Naive thymus-derived CD4-positive, alpha-beta T cell (primary cell): ENCODE measurements at regions of chr12 and their contacts with region 1.

Region 1: DNA sequence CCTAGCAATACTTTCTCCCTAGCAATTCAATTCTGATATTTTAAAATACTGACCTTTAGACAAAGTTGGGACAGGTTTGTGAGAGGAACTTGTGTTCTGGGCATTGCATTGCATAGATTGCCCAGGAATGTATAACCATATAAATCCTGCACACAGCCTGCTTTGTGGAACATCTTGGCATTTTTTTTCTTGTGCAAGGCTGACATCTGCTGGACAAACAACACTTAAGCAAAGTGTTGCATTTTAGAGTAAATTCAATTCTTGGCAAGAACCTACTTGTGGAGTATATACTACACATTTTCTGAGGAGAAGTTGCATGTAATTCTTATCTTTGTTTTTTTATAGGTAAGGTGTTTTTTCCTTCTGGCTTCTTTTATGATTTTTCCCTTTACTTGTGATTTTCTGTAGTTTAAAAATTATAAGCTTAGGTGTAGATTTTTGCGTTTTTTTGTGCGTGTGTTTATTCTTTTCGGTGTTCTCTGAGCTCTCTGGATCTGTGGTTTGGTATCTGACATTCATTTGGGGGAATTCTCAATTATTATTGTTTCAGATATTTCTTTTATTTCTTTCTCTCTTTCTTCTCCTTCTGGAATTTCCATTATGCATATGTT is 26.4 kb downstream of the TESPA1 start:
- DNase-seq: peak in 7 of 9 donors; percentile 28 to 66 (median 58)
- ATAC-seq: peak; percentile 73
- H3K4me3 ChIP-seq: no peak overlapping the region
- H3K4me3 Mint-ChIP-seq: peak overlapping the region in 7 of 10 donors; percentile 1 to 65 (median 40)
- H3K27ac ChIP-seq: peak overlapping the region; percentile 0
- H3K27ac Mint-ChIP-seq: peak overlapping the region; percentile 5 to 94 (median 77)
- H3K4me1 ChIP-seq: peaks cover 33 to 69% of the 10 kb centered on the region in 2 donors
- H3K4me1 Mint-ChIP-seq: peaks cover 64 to 100% (median 95%) of the 10 kb centered on the region in 7 donors
- H3K27me3 ChIP-seq: no peaks in the 10 kb centered on the region
- H3K27me3 Mint-ChIP-seq: no peaks in the 10 kb centered on the region

Region 2: DNA sequence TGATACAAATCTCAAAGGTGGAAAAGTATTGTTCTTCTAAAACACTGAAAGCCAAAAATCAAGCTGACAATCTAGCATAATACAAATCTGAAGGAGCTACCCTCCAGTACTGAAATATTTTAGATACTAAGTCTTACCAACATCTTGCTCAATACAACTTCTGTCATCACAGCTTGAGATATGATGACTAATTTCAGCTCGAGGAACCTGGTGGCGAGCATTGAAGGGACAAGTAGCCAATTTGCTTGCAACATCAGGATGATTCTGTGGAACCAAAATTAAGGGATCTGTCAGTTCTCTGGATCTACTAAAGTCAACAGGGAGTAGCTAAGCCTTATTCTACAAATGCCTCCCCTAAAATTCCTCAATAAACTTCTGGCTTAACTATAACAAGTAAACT is 495.1 kb before region 1 on chr12:
- CTCF ChIA-PET with region 1: no interaction called
- POLR2A ChIA-PET with region 1: no interaction called
- intact Hi-C with region 1: no loop called
- DNase-seq: no peak
- ATAC-seq: peak; percentile 54
- H3K4me3 ChIP-seq: no peak overlapping the region
- H3K4me3 Mint-ChIP-seq: no peak overlapping the region
- H3K27ac ChIP-seq: no peak overlapping the region
- H3K27ac Mint-ChIP-seq: no peak overlapping the region
- H3K4me1 ChIP-seq: no peaks in the 10 kb centered on the region
- H3K4me1 Mint-ChIP-seq: no peaks in the 10 kb centered on the region
- H3K27me3 ChIP-seq: peaks cover 0 to 2% of the 10 kb centered on the region in 2 donors
- H3K27me3 Mint-ChIP-seq: peaks cover 4 to 52% (median 10%) of the 10 kb centered on the region in 5 donors

Region 3: DNA sequence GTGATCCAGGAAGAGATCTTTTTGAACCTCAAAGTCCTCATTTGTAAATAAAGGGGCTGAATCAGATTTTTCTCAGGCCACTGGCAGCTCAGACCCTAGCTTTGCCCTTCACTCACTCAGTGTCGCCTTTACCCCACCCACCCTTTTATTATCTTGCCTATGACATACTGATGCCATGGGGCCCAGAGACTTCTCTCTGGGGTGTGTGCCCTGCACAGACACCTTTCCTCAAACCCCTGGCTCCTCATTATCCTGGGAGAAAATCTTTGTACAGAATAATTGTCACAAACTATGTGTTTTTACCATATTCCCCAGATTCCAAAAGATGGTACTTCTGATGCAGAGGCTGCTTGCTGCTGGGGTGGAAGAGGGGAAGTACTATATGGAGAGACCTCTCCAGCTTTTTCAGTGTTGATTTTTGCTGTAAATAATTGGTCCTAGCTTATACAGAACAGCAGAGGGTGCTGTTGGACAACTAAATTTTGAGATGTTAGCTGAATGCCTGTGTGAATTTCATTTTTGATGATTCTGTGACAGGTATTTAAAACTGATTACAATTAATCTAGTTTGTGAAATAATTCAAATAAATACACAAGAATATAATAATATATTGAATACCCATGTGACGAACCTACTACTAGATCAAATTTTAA is 256.1 kb before region 1 on chr12:
- CTCF ChIA-PET with region 1: interaction called, 8 read pairs
- POLR2A ChIA-PET with region 1: interaction called, 3 read pairs
- intact Hi-C with region 1: loop called (anchors 1 to 5 kb)
- DNase-seq: peak in 7 of 9 donors; percentile 16 to 67 (median 56)
- ATAC-seq: peak; percentile 81
- H3K4me3 ChIP-seq: no peak overlapping the region
- H3K4me3 Mint-ChIP-seq: no peak overlapping the region
- H3K27ac ChIP-seq: no peak overlapping the region
- H3K27ac Mint-ChIP-seq: no peak overlapping the region
- H3K4me1 ChIP-seq: no peaks in the 10 kb centered on the region
- H3K4me1 Mint-ChIP-seq: no peaks in the 10 kb centered on the region
- H3K27me3 ChIP-seq: no peaks in the 10 kb centered on the region
- H3K27me3 Mint-ChIP-seq: peaks cover 0 to 27% (median 6%) of the 10 kb centered on the region in 5 donors

Region 4: GRCh38 chr12:54723379-54724256 is 234.5 kb before region 1 on chr12:
- CTCF ChIA-PET with region 1: interaction called, 21 read pairs
- POLR2A ChIA-PET with region 1: no interaction called
- intact Hi-C with region 1: loop called in 1 of 2 experiments (anchors 1 kb)
- DNase-seq: peak in 7 of 9 donors; percentile 21 to 50 (median 35)
- ATAC-seq: peak; percentile 73
- H3K4me3 ChIP-seq: no peak overlapping the region
- H3K4me3 Mint-ChIP-seq: no peak overlapping the region
- H3K27ac ChIP-seq: no peak overlapping the region
- H3K27ac Mint-ChIP-seq: peak overlapping the region in 1 of 9 donors; percentile 18
- H3K4me1 ChIP-seq: no peaks in the 10 kb centered on the region
- H3K4me1 Mint-ChIP-seq: peaks cover 2 to 24% (median 10%) of the 10 kb centered on the region in 7 donors
- H3K27me3 ChIP-seq: no peaks in the 10 kb centered on the region
- H3K27me3 Mint-ChIP-seq: peaks cover 0 to 29% (median 8%) of the 10 kb centered on the region in 5 donors

Region 5: DNA sequence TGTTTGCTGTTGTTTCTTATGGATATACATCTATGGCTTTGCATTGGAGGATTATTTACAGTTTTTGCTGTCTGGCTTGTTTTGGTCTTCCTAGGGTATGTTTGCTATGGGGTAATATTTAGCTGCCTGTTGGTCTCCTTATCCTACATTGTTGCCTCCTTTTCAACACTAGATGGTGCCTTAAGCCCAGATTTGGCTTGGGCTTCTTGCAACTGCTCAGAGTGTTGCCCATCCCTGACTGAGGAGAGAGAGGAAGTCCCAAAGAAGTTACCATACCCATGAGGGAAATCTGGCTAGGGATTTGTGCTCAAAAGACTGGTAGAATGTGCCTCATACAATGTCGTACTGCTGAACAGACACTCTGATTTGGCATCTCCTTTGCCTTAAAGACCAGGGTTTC is 198.4 kb before region 1 on chr12:
- CTCF ChIA-PET with region 1: interaction called, 14 read pairs
- POLR2A ChIA-PET with region 1: no interaction called
- intact Hi-C with region 1: loop called in 1 of 2 experiments (anchors 1 kb)
- DNase-seq: peak in 3 of 9 donors; percentile 14 to 45 (median 26)
- ATAC-seq: no peak
- H3K4me3 ChIP-seq: no peak overlapping the region
- H3K4me3 Mint-ChIP-seq: no peak overlapping the region
- H3K27ac ChIP-seq: no peak overlapping the region
- H3K27ac Mint-ChIP-seq: no peak overlapping the region
- H3K4me1 ChIP-seq: no peaks in the 10 kb centered on the region
- H3K4me1 Mint-ChIP-seq: peaks cover 0 to 20% (median 4%) of the 10 kb centered on the region in 7 donors
- H3K27me3 ChIP-seq: no peaks in the 10 kb centered on the region
- H3K27me3 Mint-ChIP-seq: peaks cover 0 to 24% (median 0%) of the 10 kb centered on the region in 5 donors

Region 6: GRCh38 chr12:54853995-54854566 is 104.1 kb before region 1 on chr12 and contains the start of gene MUCL1:
- CTCF ChIA-PET with region 1: interaction called, 33 read pairs
- POLR2A ChIA-PET with region 1: interaction called, 3 read pairs
- intact Hi-C with region 1: loop called (anchors 1 kb)
- DNase-seq: peak; percentile 21 to 79 (median 73)
- ATAC-seq: peak; percentile 99
- H3K4me3 ChIP-seq: no peak within 1 kb of the TSS
- H3K4me3 Mint-ChIP-seq: no peak within 1 kb of the TSS
- H3K27ac ChIP-seq: no peak within 1 kb of the TSS
- H3K27ac Mint-ChIP-seq: peak within 1 kb of the TSS in 2 of 9 donors; percentile 44 to 70
- H3K4me1 ChIP-seq: no peaks in the 10 kb centered on the region
- H3K4me1 Mint-ChIP-seq: peaks cover 0 to 12% (median 5%) of the 10 kb centered on the region in 7 donors
- H3K27me3 ChIP-seq: no peaks in the 10 kb centered on the region
- H3K27me3 Mint-ChIP-seq: peaks cover 0 to 4% (median 0%) of the 10 kb centered on the region in 5 donors
- total RNA-seq, gene MUCL1: not detected

Region 7: GRCh38 chr12:54935235-54935951 is 22.8 kb before region 1 on chr12:
- CTCF ChIA-PET with region 1: interaction called, 4 read pairs
- POLR2A ChIA-PET with region 1: interaction called, 9 read pairs
- intact Hi-C with region 1: loop called in 1 of 2 experiments (anchors 2 kb)
- DNase-seq: peak in 8 of 9 donors; percentile 40 to 67 (median 51)
- ATAC-seq: peak; percentile 88
- H3K4me3 ChIP-seq: no peak overlapping the region
- H3K4me3 Mint-ChIP-seq: peak overlapping the region; percentile 0 to 74 (median 62)
- H3K27ac ChIP-seq: peak overlapping the region; percentile 29
- H3K27ac Mint-ChIP-seq: peak overlapping the region; percentile 60 to 98 (median 88)
- H3K4me1 ChIP-seq: peaks cover 36 to 39% of the 10 kb centered on the region in 2 donors
- H3K4me1 Mint-ChIP-seq: peaks cover 28 to 56% (median 53%) of the 10 kb centered on the region in 7 donors
- H3K27me3 ChIP-seq: no peaks in the 10 kb centered on the region
- H3K27me3 Mint-ChIP-seq: no peaks in the 10 kb centered on the region

Region 8: GRCh38 chr12:54977155-54977554 is 19.0 kb after region 1 on chr12:
- CTCF ChIA-PET with region 1: interaction called, 6 read pairs
- POLR2A ChIA-PET with region 1: interaction called, 309 read pairs
- intact Hi-C with region 1: loop called in 1 of 2 experiments (anchors 2 kb)
- DNase-seq: no peak
- ATAC-seq: no peak
- H3K4me3 ChIP-seq: peak overlapping the region; percentile 2
- H3K4me3 Mint-ChIP-seq: peak overlapping the region; percentile 79 to 98 (median 93)
- H3K27ac ChIP-seq: peak overlapping the region; percentile 94
- H3K27ac Mint-ChIP-seq: peak overlapping the region; percentile 57 to 98 (median 95)
- H3K4me1 ChIP-seq: peaks cover 60 to 79% of the 10 kb centered on the region in 2 donors
- H3K4me1 Mint-ChIP-seq: peaks cover 82 to 100% (median 96%) of the 10 kb centered on the region in 7 donors
- H3K27me3 ChIP-seq: no peaks in the 10 kb centered on the region
- H3K27me3 Mint-ChIP-seq: no peaks in the 10 kb centered on the region